ENCODE measurements at regions of chr11 and their contacts with region 1.

Region 1: DNA sequence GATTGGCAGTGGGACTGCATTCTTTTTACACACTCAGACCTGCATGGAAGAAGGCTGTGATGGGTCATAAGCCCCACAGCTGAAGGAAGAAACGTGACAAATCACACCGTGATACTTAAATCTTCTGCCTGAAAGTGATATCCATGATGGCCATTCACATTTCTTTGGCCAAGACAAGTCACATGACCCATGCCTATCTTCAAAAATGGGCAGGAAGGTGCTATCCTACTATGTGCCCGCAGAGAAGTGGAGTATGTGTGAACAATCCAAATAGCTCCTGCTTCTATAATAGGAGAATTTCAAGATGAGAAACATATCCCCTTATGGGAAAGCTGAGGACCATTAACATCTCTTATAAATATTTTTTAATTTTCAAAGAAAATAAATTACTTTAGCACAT is 56.6 kb upstream of the TEAD1 start:
- DNase-seq: no peak
- H3K4me3 ChIP-seq: no peak overlapping the region
- H3K27ac ChIP-seq: no peak overlapping the region
- H3K4me1 ChIP-seq: no peaks in the 10 kb centered on the region
- H3K27me3 ChIP-seq: no peaks in the 10 kb centered on the region
- CTCF ChIP-seq: no peak

Region 2: DNA sequence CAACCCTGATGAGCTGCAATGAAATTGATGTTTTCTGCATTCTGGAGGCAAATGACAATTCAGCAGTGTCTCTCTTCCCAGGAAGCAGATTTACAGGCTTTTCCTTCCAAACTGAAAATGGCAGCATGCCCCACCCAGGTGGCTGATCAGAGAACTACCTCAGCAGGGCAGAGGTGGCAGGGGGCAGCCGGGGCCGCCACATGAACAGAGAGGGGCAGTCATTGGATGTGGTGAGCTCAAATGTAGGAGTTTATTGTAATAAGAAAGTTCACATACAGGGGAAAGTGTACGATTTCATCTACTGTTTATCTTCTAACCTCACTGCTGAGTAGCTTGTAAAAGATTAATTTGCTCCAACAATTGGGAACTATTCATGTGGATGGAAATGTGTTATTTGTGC is 255.9 kb before region 1 on chr11:
- CTCF ChIA-PET with region 1: no interaction called
- POLR2A ChIA-PET with region 1: no interaction called
- intact Hi-C with region 1: no loop called
- DNase-seq: no peak
- H3K4me3 ChIP-seq: no peak overlapping the region
- H3K27ac ChIP-seq: no peak overlapping the region
- H3K4me1 ChIP-seq: 0 out of 2 replicates have a peak, but pooled peaks cover 11% of the 10 kb centered on the region
- H3K27me3 ChIP-seq: no peaks in the 10 kb centered on the region
- CTCF ChIP-seq: no peak

Region 3: DNA sequence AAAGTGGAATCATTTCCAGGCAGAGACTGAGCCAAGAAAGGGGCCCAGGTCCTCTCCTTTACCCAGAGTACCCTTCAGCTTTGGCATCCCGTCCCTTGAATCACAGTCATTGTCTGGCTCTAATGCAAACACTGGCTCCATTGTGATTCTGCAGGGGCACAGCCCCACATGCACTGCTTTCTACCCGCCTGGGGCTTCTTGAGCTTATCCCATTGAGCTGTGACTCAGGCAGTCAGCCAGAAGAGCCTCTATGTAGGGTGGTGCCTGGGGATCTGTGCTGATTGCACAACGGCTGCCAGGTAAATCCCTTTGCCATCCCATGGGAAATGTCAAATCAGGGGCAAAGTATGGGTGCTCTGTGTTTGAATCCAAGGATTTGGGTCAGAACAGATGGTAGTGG is 480.4 kb after region 1 on chr11:
- CTCF ChIA-PET with region 1: no interaction called
- POLR2A ChIA-PET with region 1: interaction called, 10 read pairs
- intact Hi-C with region 1: no loop called
- DNase-seq: peak; percentile 65 to 78
- H3K4me3 ChIP-seq: no peak overlapping the region
- H3K27ac ChIP-seq: no peak overlapping the region
- H3K4me1 ChIP-seq: peaks cover 15% of the 10 kb centered on the region
- H3K27me3 ChIP-seq: no peaks in the 10 kb centered on the region
- CTCF ChIP-seq: no peak

Measured in PC-9 (cell line).